ENCODE measurements at regions of chr20 and their contacts with region 1.

Region 1: DNA sequence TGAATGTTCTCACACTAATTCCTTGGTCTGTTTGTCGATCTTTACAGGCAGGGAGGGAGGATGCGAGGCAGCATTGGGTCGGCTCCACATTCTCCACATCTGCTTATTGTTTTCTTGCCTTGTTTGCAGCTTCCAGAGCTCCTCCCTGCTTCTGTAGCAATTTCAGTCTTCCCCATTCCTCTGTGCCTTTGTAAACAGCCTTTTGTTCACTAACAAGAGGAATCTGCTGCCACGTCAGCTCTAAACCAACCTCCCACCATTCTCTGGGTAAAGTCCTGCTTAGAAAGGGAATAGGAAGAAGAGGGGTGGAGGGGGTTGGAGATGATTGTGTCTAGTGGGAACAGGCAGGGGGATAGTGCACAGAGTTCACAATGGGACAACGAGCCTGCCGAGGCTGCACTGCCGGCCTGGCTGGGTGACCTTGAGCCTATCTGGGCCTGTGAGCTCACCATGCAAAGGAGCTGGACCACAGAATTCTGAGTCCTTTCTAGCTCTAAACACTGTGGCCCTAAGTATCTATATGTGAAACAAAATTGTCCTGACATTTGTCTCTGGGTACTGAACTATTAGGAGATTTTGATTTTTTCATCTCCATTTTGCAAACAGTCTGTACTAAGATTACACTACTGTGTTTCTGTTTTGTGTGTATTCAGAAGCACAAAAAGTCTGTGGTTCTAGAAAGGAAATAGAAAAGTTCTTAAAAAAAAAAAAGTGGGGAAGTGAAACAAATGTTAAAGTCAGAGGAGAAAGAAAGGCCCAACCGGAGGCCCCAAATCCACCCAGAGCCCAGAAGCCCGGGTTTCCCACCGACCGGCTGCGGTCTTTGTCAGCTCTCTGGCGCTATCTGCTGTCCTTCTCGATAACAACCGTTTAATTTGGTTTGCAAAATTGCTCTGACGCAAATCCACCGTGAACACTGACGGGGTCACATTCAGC is 1.4 kb upstream of the PRND start:
- DNase-seq: peak; percentile 87
- H3K27ac ChIP-seq: no peak overlapping the region
- CTCF ChIP-seq: peak; percentile 85

Region 2: DNA sequence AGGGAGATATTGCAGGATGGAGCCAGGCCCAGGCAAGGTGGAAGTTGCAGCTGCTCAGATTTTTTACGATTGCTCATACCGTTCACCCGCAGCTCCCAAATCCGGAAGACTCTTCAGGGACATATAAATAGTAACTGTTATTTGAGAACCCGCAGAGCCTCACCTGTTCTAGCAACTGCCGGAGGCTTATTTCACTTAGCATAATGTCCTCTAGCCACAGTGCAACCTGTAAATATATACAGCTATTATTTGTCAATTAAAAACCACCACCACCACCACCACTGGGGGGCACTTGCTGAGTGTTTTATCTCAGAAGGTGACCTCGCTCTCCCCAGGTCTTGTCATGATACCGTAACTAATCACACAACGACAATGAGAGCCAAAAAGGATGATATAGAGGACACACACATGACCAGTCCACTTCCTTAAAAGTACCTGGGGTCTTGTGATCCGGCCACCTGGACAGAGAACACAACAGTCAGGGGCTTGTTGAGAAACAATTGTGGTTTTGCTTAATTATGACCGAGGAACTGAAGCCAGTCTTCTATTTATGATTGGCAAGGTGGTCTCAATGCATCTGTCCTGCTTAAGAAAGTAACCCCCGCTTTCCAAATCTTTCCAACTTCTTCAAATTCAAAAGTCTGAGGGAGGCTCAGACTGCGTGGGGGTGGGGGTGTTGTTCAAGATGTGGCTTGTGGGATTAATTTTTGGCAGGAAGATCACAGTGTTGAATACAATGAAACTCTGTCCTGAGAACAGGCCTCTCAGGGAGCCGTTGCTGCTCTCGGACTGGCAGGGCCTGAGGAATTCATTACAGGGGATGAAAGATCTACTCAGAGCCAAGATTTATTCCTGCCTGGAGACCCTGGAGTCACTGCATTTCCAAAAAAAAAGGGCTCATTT is 106.3 kb before region 1 on chr20:
- CTCF ChIA-PET with region 1: interaction called, 13 read pairs
- POLR2A ChIA-PET with region 1: no interaction called
- DNase-seq: peak; percentile 74
- H3K27ac ChIP-seq: peak overlapping the region; percentile 48
- CTCF ChIP-seq: peak; percentile 77

Region 3: DNA sequence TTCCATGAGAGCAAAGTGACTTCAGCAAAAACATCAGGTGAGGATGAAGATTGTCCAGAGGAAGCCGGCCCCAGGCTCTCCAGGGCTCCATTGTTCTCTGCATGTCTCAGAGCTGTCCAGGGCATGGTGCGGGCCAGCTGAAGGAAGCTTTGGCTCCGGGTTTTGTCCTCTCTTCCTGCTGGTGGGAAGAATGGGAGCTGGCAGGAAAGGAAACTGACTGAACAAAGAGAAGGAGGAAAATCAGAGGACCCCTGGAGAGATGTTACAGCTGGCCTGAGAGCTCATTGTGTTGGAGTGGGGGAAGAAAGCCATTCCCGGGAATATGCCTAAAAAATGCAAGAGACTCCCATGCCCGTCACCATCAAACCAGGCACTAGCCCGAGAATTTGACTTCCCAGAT is 28.5 kb after region 1 on chr20:
- CTCF ChIA-PET with region 1: no interaction called
- POLR2A ChIA-PET with region 1: no interaction called
- DNase-seq: no peak
- H3K27ac ChIP-seq: no peak overlapping the region
- CTCF ChIP-seq: no peak

Measured in RWPE1 (cell line).